ENCODE measurements at regions of chr1 and their contacts with region 1.

Region 1: DNA sequence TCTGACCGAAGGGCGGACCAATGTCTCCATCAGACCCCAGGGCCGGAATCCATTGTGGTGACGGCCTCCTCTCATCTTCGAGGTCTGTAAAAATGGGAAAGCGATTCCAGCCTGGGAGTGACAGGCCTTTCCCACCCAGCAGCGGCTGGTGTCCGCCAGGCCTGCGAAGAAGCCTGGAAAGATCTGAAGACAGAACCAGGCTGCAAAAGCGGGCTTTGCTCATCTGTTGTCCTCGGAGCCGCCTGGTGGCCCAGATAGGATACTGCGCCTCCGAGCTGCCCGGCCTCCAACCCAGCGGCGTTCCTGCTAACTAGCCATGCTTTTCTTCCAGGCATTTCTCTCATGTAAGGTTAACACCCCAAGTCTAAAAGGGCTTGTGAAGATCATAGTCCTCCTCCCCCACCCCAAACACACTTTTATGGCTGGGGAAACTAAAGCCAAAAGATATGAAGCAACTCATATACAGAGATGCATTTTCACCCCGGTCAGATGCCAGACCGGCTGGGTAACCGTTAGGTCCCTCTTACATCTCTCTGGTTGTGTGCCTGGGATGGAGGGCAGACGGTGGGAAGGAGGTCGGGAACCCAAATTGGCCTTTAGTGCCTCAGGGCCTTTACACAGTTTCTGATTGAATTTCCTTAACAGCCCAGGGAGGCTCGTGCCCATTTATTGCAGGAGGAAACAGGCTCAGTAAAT is 1.9 kb upstream of the DHRS3 start:
- DNase-seq: peak; percentile 64 to 83 (median 74)
- ATAC-seq: peak; percentile 69
- H3K4me3 ChIP-seq: peak overlapping the region; percentile 81
- H3K4me3 Mint-ChIP-seq: peak overlapping the region; percentile 90 to 99 (median 99)
- H3K27ac ChIP-seq: peak overlapping the region; percentile 86
- H3K27ac Mint-ChIP-seq: peak overlapping the region; percentile 62 to 98 (median 94)
- H3K4me1 ChIP-seq: peaks cover 22 to 35% of the 10 kb centered on the region in 2 donors
- H3K4me1 Mint-ChIP-seq: peaks cover 27 to 41% (median 38%) of the 10 kb centered on the region in 7 donors
- H3K27me3 ChIP-seq: no peaks in the 10 kb centered on the region
- H3K27me3 Mint-ChIP-seq: peaks cover 0 to 13% (median 0%) of the 10 kb centered on the region in 5 donors

Region 2: DNA sequence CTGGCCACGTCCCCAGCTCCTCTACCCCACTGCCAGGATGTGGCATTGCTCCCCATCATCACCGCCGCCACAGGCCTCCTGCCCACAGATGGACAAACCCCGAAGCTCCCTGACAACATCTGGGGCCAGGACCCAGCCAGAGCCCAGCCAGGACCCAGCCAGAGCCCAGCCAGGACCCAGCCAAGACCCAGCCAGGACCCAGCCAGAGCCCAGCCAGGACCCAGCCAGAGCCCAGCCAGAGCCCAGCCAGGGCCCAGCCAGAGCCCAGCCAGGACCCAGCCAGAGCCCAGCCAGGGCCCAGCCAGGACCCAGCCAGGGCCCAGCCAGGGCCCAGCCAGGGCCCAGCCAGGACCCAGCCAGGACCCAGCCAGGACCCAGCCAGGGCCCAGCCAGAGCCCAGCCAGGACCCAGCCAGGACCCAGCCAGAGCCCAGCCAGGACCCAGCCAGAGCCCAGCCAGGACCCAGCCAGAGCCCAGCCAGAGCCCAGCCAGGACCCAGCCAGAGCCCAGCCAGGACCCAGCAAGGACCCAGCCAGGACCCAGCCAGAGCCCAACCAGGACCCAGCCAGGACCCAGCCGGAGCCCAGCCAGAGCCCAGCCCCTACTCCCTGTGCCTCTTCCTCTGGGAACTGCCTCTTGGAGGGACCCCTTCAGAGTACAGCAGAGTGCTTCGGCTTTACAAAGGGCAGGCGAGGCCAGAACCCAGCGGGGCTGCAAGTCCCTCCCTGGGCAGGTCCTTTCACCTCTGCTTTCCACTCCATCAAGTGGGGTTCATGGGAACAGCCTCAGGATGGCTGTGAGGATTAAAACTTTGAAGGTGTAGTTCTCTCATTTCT is 1097.3 kb before region 1 on chr1:
- CTCF ChIA-PET with region 1: no interaction called
- POLR2A ChIA-PET with region 1: no interaction called
- intact Hi-C with region 1: no loop called
- DNase-seq: no peak
- ATAC-seq: no peak
- H3K4me3 ChIP-seq: no peak overlapping the region
- H3K4me3 Mint-ChIP-seq: no peak overlapping the region
- H3K27ac ChIP-seq: no peak overlapping the region
- H3K27ac Mint-ChIP-seq: no peak overlapping the region
- H3K4me1 ChIP-seq: no peaks in the 10 kb centered on the region
- H3K4me1 Mint-ChIP-seq: peaks cover 0 to 5% (median 0%) of the 10 kb centered on the region in 7 donors
- H3K27me3 ChIP-seq: no peaks in the 10 kb centered on the region
- H3K27me3 Mint-ChIP-seq: no peaks in the 10 kb centered on the region

Region 3: GRCh38 chr1:11907275-11908094 is 712.5 kb before region 1 on chr1:
- CTCF ChIA-PET with region 1: no interaction called
- POLR2A ChIA-PET with region 1: no interaction called
- intact Hi-C with region 1: loop called in 1 of 2 experiments (anchors 5 kb)
- DNase-seq: peak; percentile 69 to 96 (median 94)
- ATAC-seq: peak; percentile 75
- H3K4me3 ChIP-seq: peak overlapping the region; percentile 92
- H3K4me3 Mint-ChIP-seq: peak overlapping the region; percentile 92 to 97 (median 94)
- H3K27ac ChIP-seq: peak overlapping the region; percentile 99
- H3K27ac Mint-ChIP-seq: peak overlapping the region; percentile 99 to 100 (median 100)
- H3K4me1 ChIP-seq: peaks cover 19% of the 10 kb centered on the region in 2 donors
- H3K4me1 Mint-ChIP-seq: peaks cover 9 to 45% (median 34%) of the 10 kb centered on the region in 7 donors
- H3K27me3 ChIP-seq: peaks cover 0 to 4% of the 10 kb centered on the region in 2 donors
- H3K27me3 Mint-ChIP-seq: peaks cover 0 to 41% (median under 1%) of the 10 kb centered on the region in 5 donors

Region 4: GRCh38 chr1:12229835-12230548 is 389.9 kb before region 1 on chr1 and contains the start of gene VPS13D:
- CTCF ChIA-PET with region 1: no interaction called
- POLR2A ChIA-PET with region 1: no interaction called
- intact Hi-C with region 1: loop called (anchors 2 to 5 kb)
- DNase-seq: peak; percentile 70 to 89 (median 84)
- ATAC-seq: peak; percentile 98
- H3K4me3 ChIP-seq: peak within 1 kb of the TSS; percentile 82
- H3K4me3 Mint-ChIP-seq: peak within 1 kb of the TSS; percentile 84 to 95 (median 90)
- H3K27ac ChIP-seq: peak within 1 kb of the TSS; percentile 92
- H3K27ac Mint-ChIP-seq: peak within 1 kb of the TSS; percentile 63 to 91 (median 85)
- H3K4me1 ChIP-seq: peaks cover 19 to 21% of the 10 kb centered on the region in 2 donors
- H3K4me1 Mint-ChIP-seq: peaks cover 4 to 38% (median 27%) of the 10 kb centered on the region in 7 donors
- H3K27me3 ChIP-seq: no peaks in the 10 kb centered on the region
- H3K27me3 Mint-ChIP-seq: peaks cover 0 to 6% (median 0%) of the 10 kb centered on the region in 5 donors
- total RNA-seq, gene VPS13D: 43.8 to 94.4 (median 77.3) TPM

Region 5: DNA sequence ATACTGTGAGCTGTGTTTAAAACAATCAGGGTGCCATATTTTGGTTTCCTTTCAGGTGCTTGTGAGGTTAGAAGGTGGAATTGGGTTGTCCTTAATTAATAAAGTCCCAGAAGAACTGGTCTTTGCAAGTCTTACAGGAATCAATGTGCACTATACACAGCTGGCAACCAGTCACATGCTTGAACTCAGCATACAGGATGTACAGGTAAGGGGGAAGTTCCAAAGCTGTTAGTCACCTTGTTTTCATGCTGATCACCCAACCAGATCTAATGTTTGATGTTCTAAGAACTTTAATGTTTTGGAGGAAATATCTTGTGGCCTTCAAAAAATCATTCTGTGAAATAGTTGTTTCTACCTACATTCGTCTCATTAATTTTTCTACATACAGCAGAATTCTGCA is 233.8 kb before region 1 on chr1:
- CTCF ChIA-PET with region 1: interaction called, 7 read pairs
- POLR2A ChIA-PET with region 1: interaction called, 22 read pairs
- intact Hi-C with region 1: loop called (anchors 1 kb)
- DNase-seq: peak in 7 of 9 donors; percentile 23 to 55 (median 42)
- ATAC-seq: peak; percentile 95
- H3K4me3 ChIP-seq: peak overlapping the region; percentile 2
- H3K4me3 Mint-ChIP-seq: peak overlapping the region; percentile 30 to 81 (median 64)
- H3K27ac ChIP-seq: peak overlapping the region; percentile 52
- H3K27ac Mint-ChIP-seq: peak overlapping the region; percentile 61 to 96 (median 80)
- H3K4me1 ChIP-seq: peaks cover 31 to 40% of the 10 kb centered on the region in 2 donors
- H3K4me1 Mint-ChIP-seq: peaks cover 32 to 61% (median 52%) of the 10 kb centered on the region in 7 donors
- H3K27me3 ChIP-seq: no peaks in the 10 kb centered on the region
- H3K27me3 Mint-ChIP-seq: no peaks in the 10 kb centered on the region

Region 6: GRCh38 chr1:12448746-12449177 is 171.2 kb before region 1 on chr1:
- CTCF ChIA-PET with region 1: interaction called, 3 read pairs
- POLR2A ChIA-PET with region 1: no interaction called
- intact Hi-C with region 1: loop called (anchors 1 kb)
- DNase-seq: no peak
- ATAC-seq: no peak
- H3K4me3 ChIP-seq: peak overlapping the region; percentile 9
- H3K4me3 Mint-ChIP-seq: peak overlapping the region; percentile 78 to 94 (median 86)
- H3K27ac ChIP-seq: peak overlapping the region; percentile 59
- H3K27ac Mint-ChIP-seq: peak overlapping the region; percentile 76 to 98 (median 94)
- H3K4me1 ChIP-seq: peaks cover 29 to 74% of the 10 kb centered on the region in 2 donors
- H3K4me1 Mint-ChIP-seq: peaks cover 44 to 98% (median 86%) of the 10 kb centered on the region in 7 donors
- H3K27me3 ChIP-seq: no peaks in the 10 kb centered on the region
- H3K27me3 Mint-ChIP-seq: peaks cover 0 to 31% (median 0%) of the 10 kb centered on the region in 5 donors

Region 7: DNA sequence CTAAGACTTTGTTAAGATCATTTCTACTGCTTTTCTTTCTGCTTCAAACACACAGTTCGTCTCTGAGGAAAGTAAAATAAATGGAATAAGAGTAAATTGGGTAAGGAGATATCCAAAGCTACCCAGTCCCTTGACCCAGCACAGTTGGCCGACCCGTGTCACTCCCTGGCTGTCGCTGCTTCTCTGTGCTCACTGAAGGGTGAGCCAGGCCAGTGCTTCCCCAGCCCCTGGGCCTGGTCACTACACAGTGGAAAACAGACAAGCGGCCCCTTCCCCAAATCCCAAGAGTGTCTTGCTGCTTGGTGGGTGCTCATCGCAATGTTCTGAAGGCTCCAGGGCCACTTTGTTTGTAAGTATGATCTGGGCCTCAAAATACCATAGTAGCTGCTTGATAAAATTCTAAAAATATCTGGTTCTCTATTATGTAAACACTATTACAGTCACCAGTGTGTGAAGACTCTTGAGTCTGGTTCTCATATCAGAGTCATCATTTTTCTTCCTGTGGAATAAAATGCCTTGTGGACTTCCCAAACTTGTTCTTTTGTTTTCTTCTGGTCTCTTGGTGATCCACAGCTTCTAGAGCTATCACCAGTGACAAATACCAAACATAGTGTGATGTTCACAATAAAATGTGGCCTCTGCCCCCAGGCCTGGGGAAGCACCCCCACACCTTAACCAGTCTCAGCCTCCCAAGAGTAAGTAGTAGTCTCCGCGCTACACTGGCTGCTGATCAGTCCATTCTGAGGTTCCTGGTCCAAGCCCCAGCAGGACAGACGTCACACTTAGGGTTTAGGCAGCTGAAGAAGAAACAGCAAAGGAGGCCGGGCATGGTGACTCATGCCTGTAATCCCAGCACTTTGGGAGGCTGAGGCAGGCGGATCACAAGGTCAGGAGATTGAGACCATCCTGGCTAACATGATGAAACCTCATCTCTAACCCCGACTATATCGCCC is 108.1 kb before region 1 on chr1:
- CTCF ChIA-PET with region 1: interaction called, 5 read pairs
- POLR2A ChIA-PET with region 1: interaction called, 42 read pairs
- intact Hi-C with region 1: loop called (anchors 1 to 2 kb)
- DNase-seq: no peak
- ATAC-seq: no peak
- H3K4me3 ChIP-seq: peak overlapping the region; percentile 69
- H3K4me3 Mint-ChIP-seq: peak overlapping the region; percentile 79 to 97 (median 88)
- H3K27ac ChIP-seq: peak overlapping the region; percentile 75
- H3K27ac Mint-ChIP-seq: peak overlapping the region; percentile 94 to 100 (median 98)
- H3K4me1 ChIP-seq: peaks cover 26% of the 10 kb centered on the region in 2 donors
- H3K4me1 Mint-ChIP-seq: peaks cover 30 to 72% (median 59%) of the 10 kb centered on the region in 7 donors
- H3K27me3 ChIP-seq: no peaks in the 10 kb centered on the region
- H3K27me3 Mint-ChIP-seq: no peaks in the 10 kb centered on the region

Region 8: DNA sequence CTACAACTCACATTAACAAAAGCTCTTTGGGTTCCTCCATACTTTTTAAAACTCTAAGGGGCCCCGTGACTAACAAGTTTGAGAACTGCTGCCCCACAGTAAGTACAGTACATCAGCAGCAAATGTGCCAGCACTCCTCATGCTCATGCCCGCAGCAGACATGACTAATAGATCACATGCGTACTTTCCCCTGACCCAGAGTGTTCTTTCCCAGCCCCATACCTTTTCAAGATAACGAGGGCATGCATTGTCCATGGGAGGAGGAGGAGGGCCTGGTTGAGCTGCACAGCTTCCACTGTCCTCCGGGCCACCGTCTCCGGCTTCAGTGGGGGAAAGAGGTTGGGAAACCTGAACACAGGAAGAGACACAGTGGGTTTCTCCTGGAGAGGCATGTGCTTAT is 47.4 kb before region 1 on chr1:
- CTCF ChIA-PET with region 1: no interaction called
- POLR2A ChIA-PET with region 1: no interaction called
- intact Hi-C with region 1: no loop called
- DNase-seq: no peak
- ATAC-seq: no peak
- H3K4me3 ChIP-seq: no peak overlapping the region
- H3K4me3 Mint-ChIP-seq: no peak overlapping the region
- H3K27ac ChIP-seq: no peak overlapping the region
- H3K27ac Mint-ChIP-seq: peak overlapping the region in 2 of 9 donors; percentile 31 to 33
- H3K4me1 ChIP-seq: no peaks in the 10 kb centered on the region
- H3K4me1 Mint-ChIP-seq: peaks cover 0 to 3% (median 0%) of the 10 kb centered on the region in 7 donors
- H3K27me3 ChIP-seq: no peaks in the 10 kb centered on the region
- H3K27me3 Mint-ChIP-seq: no peaks in the 10 kb centered on the region

Region 9: DNA sequence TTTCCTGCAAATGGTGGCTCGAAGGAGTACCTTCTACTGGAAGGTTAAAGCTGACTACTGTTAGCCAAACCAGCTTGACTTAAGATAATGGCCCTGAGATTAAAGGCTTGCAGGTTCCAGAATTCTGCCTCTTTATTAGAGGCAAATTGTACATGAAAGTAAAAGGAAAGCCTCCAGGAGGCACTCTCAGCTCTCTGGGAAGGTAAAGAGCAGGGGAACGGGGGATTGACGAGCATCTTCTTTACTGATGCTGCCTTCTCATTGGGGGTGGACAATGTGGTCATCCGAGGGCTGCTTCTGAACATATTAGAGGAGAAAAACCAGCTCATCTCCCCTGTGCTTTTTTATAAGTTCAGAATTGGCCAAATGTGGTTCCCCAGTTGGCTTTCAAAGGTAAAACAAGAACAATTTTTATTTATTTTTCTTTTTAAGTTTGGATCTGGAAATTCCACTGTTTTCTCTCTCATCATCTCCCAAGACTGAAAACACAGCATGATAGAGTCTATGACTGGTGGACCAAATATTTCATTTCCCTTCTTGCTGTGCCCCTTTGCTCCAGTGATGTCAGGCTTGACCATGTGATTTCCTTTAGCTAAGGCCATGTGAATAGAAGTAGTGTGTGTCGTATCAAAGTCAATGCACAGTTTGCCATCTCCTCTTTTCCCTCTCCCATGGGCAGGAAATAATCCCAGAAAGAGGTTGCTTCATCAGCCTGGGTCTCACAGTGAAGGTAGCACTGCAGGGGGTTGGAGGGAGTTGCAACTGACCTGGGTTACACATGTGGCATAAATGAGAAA is 1372.7 kb after region 1 on chr1:
- CTCF ChIA-PET with region 1: no interaction called
- POLR2A ChIA-PET with region 1: no interaction called
- intact Hi-C with region 1: no loop called
- DNase-seq: no peak
- ATAC-seq: no peak
- H3K4me3 ChIP-seq: no peak overlapping the region
- H3K4me3 Mint-ChIP-seq: no peak overlapping the region
- H3K27ac ChIP-seq: no peak overlapping the region
- H3K27ac Mint-ChIP-seq: no peak overlapping the region
- H3K4me1 ChIP-seq: no peaks in the 10 kb centered on the region
- H3K4me1 Mint-ChIP-seq: no peaks in the 10 kb centered on the region
- H3K27me3 ChIP-seq: no peaks in the 10 kb centered on the region
- H3K27me3 Mint-ChIP-seq: peaks cover 2 to 56% (median 44%) of the 10 kb centered on the region in 5 donors